OCI-LY7 (cell line): ENCODE measurements at regions of chr2 and their contacts with region 1.

Region 1: GRCh38 chr2:73176881-73177644 is 25.3 kb upstream of the NOTO start:
- DNase-seq: peak; percentile 82
- H3K4me3 ChIP-seq: peak overlapping the region; percentile 63
- H3K27ac ChIP-seq: no peak overlapping the region
- H3K4me1 ChIP-seq: no peaks in the 10 kb centered on the region
- CTCF ChIP-seq: peak; percentile 96

Region 2: DNA sequence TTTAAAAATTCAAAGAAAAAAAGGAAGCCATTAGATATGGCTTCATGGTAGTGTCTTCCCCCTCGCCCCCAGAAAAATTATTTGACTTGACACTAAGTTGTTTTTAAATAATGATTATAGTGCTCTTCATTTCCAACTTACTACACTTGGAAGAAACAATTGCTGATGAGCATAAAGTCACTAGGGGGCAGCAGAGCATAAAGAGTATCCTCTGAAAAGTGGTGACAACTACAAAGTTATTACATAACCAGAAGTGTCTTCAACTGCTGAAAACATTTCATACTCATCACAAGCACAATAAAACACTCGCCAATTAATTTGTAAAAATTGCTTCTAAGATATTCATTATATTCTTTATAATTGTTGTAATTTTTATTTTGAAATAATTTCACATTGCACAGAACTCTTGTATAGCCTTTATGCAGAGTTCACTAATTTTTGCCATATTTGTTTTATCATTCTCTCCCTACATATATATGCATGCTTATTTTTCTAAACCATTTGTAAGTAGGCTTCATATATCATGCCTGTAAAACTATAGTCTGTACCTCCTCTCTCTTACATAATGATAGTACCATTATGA is 406.1 kb before region 1 on chr2:
- CTCF ChIA-PET with region 1: no interaction called
- POLR2A ChIA-PET with region 1: no interaction called
- intact Hi-C with region 1: loop called (anchors 2 kb)
- DNase-seq: peak; percentile 61
- H3K4me3 ChIP-seq: no peak overlapping the region
- H3K27ac ChIP-seq: no peak overlapping the region
- H3K4me1 ChIP-seq: no peaks in the 10 kb centered on the region
- CTCF ChIP-seq: peak; percentile 94

Region 3: GRCh38 chr2:72892506-72893173 is 284.4 kb before region 1 on chr2:
- CTCF ChIA-PET with region 1: interaction called, 3 read pairs
- POLR2A ChIA-PET with region 1: no interaction called
- intact Hi-C with region 1: loop called (anchors 1 kb)
- DNase-seq: peak; percentile 70
- H3K4me3 ChIP-seq: no peak overlapping the region
- H3K27ac ChIP-seq: no peak overlapping the region
- H3K4me1 ChIP-seq: no peaks in the 10 kb centered on the region
- CTCF ChIP-seq: peak; percentile 79

Region 4: GRCh38 chr2:72926368-72926767 is 250.7 kb before region 1 on chr2:
- CTCF ChIA-PET with region 1: interaction called, 10 read pairs
- POLR2A ChIA-PET with region 1: no interaction called
- intact Hi-C with region 1: no loop called
- DNase-seq: no peak
- H3K4me3 ChIP-seq: no peak overlapping the region
- H3K27ac ChIP-seq: no peak overlapping the region
- H3K4me1 ChIP-seq: no peaks in the 10 kb centered on the region
- CTCF ChIP-seq: no peak

Region 5: GRCh38 chr2:72993147-72993932 is 183.7 kb before region 1 on chr2:
- CTCF ChIA-PET with region 1: interaction called, 4 read pairs
- POLR2A ChIA-PET with region 1: no interaction called
- intact Hi-C with region 1: loop called (anchors 1 kb)
- DNase-seq: peak; percentile 59
- H3K4me3 ChIP-seq: no peak overlapping the region
- H3K27ac ChIP-seq: no peak overlapping the region
- H3K4me1 ChIP-seq: no peaks in the 10 kb centered on the region
- CTCF ChIP-seq: peak; percentile 83

Region 6: DNA sequence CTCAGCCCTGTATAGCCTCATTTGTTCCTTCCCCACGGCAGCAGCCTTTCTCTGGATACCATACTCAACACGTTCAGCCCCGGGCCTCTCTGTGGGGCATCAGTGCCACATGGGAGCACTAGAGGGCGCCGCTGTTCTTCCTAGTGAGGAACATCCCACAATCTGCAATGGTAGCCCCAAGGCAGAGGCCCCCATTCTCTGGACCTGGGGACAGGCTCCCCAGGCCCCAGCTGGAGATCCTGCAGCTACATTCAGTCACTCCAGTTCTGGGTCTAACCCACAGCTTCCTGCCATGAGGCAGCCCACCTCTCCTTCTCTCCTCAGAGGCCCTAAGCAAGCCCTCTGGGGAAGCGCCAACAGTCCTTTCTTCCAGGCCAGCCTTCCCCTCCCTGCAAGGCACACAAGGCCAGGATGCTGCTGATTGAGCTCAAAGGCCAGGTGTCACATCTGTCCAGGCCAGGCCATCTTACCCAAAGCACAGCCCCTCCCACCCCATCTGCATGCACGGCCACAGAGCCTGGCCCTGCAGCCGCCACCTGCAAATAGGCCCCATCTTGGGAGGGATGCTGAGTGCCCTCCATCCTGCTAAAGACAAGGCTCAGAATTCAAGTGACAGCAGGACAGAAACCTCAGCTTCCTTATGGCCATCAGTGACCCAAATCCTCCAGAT is 91.2 kb before region 1 on chr2:
- CTCF ChIA-PET with region 1: interaction called, 4 read pairs
- POLR2A ChIA-PET with region 1: no interaction called
- intact Hi-C with region 1: loop called (anchors 1 kb)
- DNase-seq: peak; percentile 76
- H3K4me3 ChIP-seq: no peak overlapping the region
- H3K27ac ChIP-seq: no peak overlapping the region
- H3K4me1 ChIP-seq: no peaks in the 10 kb centered on the region
- CTCF ChIP-seq: peak; percentile 90

Region 7: DNA sequence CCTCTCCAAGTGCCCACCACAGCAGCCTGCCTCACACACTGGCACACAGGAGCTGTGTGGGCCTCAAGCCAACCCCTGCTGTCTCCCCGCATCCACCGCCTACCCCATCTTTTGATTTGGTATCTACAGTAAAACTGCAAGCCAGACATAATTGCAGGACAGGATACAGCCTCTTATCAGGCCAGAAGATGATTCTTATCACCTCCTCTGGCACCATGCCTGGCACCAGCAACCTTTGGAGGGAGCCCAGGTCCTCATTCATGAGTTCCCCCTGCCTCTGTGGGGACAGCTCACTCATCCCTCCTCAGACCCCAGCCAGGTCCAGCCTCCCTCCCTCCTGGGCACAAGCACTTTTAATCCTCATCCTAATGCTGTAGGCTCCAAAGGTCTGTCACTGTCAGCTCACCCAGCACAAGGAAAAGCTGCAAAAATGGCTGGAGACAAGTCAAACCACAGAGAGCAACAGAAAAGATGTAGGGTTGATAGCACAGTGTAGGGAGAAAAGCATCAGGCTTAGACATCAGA is 74.0 kb before region 1 on chr2:
- CTCF ChIA-PET with region 1: no interaction called
- POLR2A ChIA-PET with region 1: no interaction called
- intact Hi-C with region 1: no loop called
- DNase-seq: no peak
- H3K4me3 ChIP-seq: no peak overlapping the region
- H3K27ac ChIP-seq: no peak overlapping the region
- H3K4me1 ChIP-seq: no peaks in the 10 kb centered on the region
- CTCF ChIP-seq: no peak

Region 8: DNA sequence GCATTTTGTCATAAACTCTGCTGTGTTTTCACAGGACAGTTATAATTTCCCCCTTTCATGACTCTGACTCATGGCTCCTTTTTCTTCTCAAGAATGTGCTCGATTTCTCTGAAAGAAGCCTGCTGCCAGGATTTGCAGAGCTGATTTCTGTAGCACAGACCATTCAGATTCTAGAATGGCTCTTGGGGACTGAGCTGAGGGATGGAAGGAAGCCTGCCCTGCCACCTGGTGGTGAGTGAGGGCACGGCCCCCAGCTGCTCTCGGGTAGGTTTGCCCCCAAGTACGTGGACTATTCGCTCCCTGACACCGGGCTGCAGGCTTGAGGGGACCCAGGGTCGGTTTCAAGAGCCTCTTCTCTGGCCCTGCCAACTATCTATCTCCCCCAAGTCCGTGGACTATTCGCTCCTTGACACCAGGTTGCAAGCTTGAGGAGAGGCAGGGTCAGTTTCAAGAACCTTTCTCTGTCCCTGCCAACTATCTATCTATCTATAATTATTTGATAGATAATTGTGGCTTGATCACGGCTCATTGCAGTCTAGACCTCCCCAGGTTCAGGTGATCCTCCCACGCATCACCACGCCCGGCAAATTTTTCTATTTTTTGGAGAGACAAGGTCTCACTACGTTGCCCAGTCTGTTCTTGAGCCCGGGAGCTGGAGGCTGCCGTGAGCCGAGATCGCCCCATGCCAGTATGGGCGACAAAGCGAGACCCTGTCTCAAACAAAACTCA is 35.5 kb after region 1 on chr2:
- CTCF ChIA-PET with region 1: interaction called, 6 read pairs
- POLR2A ChIA-PET with region 1: interaction called, 3 read pairs
- intact Hi-C with region 1: loop called (anchors 2 kb)
- DNase-seq: peak; percentile 79
- H3K4me3 ChIP-seq: no peak overlapping the region
- H3K27ac ChIP-seq: no peak overlapping the region
- H3K4me1 ChIP-seq: peaks cover 25% of the 10 kb centered on the region
- CTCF ChIP-seq: peak; percentile 94